ENCODE measurements at regions of chr1 and their contacts with region 1.

Region 1: GRCh38 chr1:145823565-145824498 is at the starts of genes POLR3C and RNF115:
- DNase-seq: peak; percentile 89 to 91
- ATAC-seq: peak; percentile 87 to 89
- H3K4me3 ChIP-seq: peak within 1 kb of the TSS; percentile 63 to 80 (median 74)
- H3K27ac ChIP-seq: peak within 1 kb of the TSS; percentile 86 to 92 (median 88)
- H3K4me1 ChIP-seq: peaks cover 15 to 19% of the 10 kb centered on the region in 2 donors
- H3K27me3 ChIP-seq: no peaks in the 10 kb centered on the region
- CTCF ChIP-seq: no peak
- POLR2A ChIP-seq: peak; percentile 94 to 97
- total RNA-seq, gene POLR3C: 23.0 to 27.8 (median 26.4) TPM
- total RNA-seq, gene RNF115: 16.1 to 65.4 (median 37.3) TPM

Region 2: GRCh38 chr1:145845514-145846161 is 21.8 kb after region 1 on chr1 and contains the start of gene NUDT17:
- in situ Hi-C with region 1: no loop called
- intact Hi-C with region 1: loop called (anchors 1 kb)
- DNase-seq: peak; percentile 62 to 74
- ATAC-seq: peak; percentile 75 to 84
- H3K4me3 ChIP-seq: peak within 1 kb of the TSS; percentile 51 to 65 (median 58)
- H3K27ac ChIP-seq: peak within 1 kb of the TSS; percentile 69 to 81 (median 77)
- H3K4me1 ChIP-seq: peaks cover 6 to 14% of the 10 kb centered on the region in 2 donors
- H3K27me3 ChIP-seq: no peaks in the 10 kb centered on the region
- CTCF ChIP-seq: peak; percentile 89 to 97 (median 94)
- POLR2A ChIP-seq: peak in 1 of 2 donors; percentile 8
- total RNA-seq, gene NUDT17: 0.46 to 2.2 (median 0.51) TPM in 3 of 4 donors, not detected in the other

Region 3: GRCh38 chr1:145871994-145872924 is 48.4 kb after region 1 on chr1:
- in situ Hi-C with region 1: no loop called
- intact Hi-C with region 1: loop called (anchors 10 kb)
- DNase-seq: peak; percentile 69 to 88
- ATAC-seq: peak; percentile 91 to 93
- H3K4me3 ChIP-seq: peak overlapping the region; percentile 64 to 95 (median 73)
- H3K27ac ChIP-seq: peak overlapping the region; percentile 83 to 91 (median 88)
- H3K4me1 ChIP-seq: peaks cover 14 to 18% of the 10 kb centered on the region in 2 donors
- H3K27me3 ChIP-seq: no peaks in the 10 kb centered on the region
- CTCF ChIP-seq: no peak
- POLR2A ChIP-seq: peak in 1 of 2 donors; percentile 17